ENCODE measurements at regions of chr4 and their contacts with region 1.

Region 1: DNA sequence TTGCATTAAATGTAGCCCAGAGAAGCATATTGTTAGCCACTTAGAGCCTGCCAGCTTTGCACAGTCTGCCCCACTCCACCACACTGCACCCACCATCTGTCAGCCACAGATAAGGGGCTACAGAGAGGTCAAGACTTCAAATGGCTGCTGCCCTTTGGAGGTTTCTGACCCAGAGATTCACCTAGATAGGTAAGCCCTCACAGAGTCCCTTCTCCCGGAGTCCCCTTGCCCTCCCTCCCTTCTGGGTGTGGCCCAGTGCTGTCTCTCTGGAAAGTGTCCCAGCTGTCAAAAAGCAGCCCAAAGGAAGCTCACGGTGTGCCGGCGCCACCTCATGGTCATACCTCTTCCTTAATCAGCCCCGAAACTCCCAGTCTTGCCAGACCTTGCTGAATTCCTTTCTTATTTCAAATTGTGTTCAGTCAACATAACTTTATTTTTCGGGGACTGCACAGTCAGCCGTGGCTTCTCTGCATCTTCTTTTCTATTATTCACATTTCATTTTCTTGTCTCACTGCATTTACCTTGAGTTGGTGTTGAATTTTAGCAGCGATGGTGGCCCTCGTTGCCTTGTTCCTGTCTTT is 14.1 kb upstream of the GRPEL1 start:
- DNase-seq: peak; percentile 78
- ATAC-seq: peak; percentile 97
- H3K4me3 Mint-ChIP-seq: no peak overlapping the region
- H3K27ac Mint-ChIP-seq: no peak overlapping the region
- H3K4me1 Mint-ChIP-seq: peaks cover 4% of the 10 kb centered on the region
- H3K27me3 Mint-ChIP-seq: peaks cover 73% of the 10 kb centered on the region
- CTCF ChIP-seq: 0 out of 2 replicates have a peak, but pooled peaks have one; percentile 20

Region 2: DNA sequence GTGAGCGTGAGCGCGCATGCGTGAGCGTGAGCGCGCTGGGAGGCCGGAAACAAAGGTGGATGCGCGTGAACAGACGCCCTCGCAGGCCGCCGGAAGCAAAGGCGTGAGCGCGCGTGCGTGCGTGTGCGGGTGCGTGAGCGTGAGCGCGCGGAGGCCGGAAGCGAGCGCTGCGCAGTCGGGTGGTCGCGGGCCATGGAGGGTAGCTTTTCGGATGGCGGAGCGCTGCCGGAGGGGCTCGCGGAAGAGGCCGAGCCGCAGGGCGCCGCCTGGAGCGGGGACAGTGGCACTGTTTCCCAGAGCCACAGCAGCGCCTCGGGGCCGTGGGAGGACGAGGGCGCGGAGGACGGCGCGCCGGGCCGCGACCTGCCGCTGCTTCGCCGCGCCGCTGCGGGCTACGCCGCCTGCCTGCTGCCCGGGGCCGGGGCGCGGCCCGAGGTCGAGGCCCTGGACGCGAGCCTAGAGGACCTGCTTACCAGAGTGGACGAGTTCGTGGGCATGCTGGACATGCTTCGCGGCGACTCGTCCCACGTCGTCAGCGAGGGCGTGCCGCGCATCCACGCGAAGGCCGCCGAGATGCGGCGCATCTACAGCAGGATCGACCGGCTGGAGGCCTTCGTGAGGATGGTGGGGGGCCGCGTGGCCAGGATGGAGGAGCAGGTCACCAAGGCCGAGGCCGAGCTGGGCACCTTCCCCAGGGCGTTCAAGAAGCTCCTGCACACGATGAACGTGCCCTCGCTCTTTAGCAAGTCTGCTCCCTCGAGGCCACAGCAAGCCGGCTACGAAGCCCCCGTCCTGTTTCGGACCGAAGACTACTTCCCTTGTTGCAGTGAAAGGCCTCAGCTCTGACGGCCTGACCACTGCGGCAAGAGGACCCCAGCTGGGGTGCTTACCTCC is 365.7 kb before region 1 on chr4 and contains the start of gene BLOC1S4:
- CTCF ChIA-PET with region 1: interaction called, 11 read pairs
- POLR2A ChIA-PET with region 1: no interaction called
- DNase-seq: peak; percentile 77
- ATAC-seq: peak; percentile 73
- H3K4me3 Mint-ChIP-seq: peak within 1 kb of the TSS; percentile 75
- H3K27ac Mint-ChIP-seq: peak within 1 kb of the TSS; percentile 96
- H3K4me1 Mint-ChIP-seq: peaks cover 8% of the 10 kb centered on the region
- H3K27me3 Mint-ChIP-seq: peaks cover 34% of the 10 kb centered on the region
- CTCF ChIP-seq: no peak
- total RNA-seq, gene BLOC1S4: 21.4 to 23.4 TPM (median 21.9 TPM) in 3 replicates

Region 3: GRCh38 chr4:7101692-7102515 is 19.9 kb after region 1 on chr4:
- CTCF ChIA-PET with region 1: interaction called, 23 read pairs
- POLR2A ChIA-PET with region 1: no interaction called
- DNase-seq: peak; percentile 82
- ATAC-seq: peak; percentile 87
- H3K4me3 Mint-ChIP-seq: peak overlapping the region; percentile 89
- H3K27ac Mint-ChIP-seq: no peak overlapping the region
- H3K4me1 Mint-ChIP-seq: peaks cover 15% of the 10 kb centered on the region
- H3K27me3 Mint-ChIP-seq: peaks cover 85% of the 10 kb centered on the region
- CTCF ChIP-seq: peak; percentile 41; the same call in 1 of the 2 replicates

Measured in WTC11 (cell line).